ENCODE measurements at regions of chr11 and their contacts with region 1.

Region 1: DNA sequence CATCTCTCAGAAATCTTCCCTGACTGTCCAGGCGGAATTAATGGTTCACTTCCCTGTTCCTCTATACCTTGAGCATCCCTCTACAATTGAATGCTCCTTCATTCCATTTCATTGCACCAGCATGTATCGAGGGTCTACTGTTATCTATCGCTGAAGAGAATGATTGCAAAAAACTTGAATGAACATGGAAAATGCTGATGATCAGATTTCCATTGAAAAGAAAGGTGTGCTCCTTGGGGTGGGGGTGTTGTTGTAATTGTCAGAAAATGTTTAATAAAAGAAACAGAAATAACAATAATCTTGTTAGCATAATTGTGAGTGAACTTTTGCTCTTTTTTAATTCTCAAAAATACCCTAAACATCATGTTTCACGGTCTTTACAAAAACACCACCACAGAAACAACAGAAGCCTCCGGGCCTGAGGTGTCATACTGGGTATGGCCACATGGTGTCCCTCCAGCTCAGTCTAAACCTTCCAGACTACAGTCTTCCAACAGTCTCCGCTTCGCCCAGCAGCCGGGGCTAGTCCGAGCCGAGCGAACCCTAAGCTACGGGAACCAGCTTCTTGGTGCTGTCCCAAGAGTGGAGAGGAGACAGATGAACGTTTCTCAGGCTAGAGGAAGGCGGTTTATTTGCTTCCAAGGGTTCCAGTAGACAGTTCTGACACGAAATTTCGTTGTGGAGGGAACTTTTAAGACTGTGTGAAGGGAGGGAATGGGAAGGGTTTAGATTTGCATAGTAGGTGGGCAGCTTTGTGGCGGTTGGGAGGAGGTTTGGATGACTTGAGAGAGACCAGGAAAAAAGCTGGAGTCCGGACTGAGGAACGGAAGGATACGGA is 75.8 kb upstream of the ZBED5 start:
- DNase-seq: peak; percentile 96
- ATAC-seq: peak; percentile 77
- H3K4me3 ChIP-seq: peak overlapping the region; percentile 57 to 75
- H3K27ac ChIP-seq: peak overlapping the region; percentile 93
- H3K4me1 ChIP-seq: peaks cover 39% of the 10 kb centered on the region
- H3K27me3 ChIP-seq: no peaks in the 10 kb centered on the region
- CTCF ChIP-seq: peak; percentile 99

Region 2: GRCh38 chr11:10550503-10551289 is 383.0 kb before region 1 on chr11:
- CTCF ChIA-PET with region 1: no interaction called
- POLR2A ChIA-PET with region 1: no interaction called
- in situ Hi-C with region 1: no loop called
- intact Hi-C with region 1: no loop called
- DNase-seq: no peak
- ATAC-seq: peak; percentile 87
- H3K4me3 ChIP-seq: no peak overlapping the region
- H3K27ac ChIP-seq: no peak overlapping the region
- H3K4me1 ChIP-seq: no peaks in the 10 kb centered on the region
- H3K27me3 ChIP-seq: peaks cover 3% of the 10 kb centered on the region
- CTCF ChIP-seq: no peak

Region 3: DNA sequence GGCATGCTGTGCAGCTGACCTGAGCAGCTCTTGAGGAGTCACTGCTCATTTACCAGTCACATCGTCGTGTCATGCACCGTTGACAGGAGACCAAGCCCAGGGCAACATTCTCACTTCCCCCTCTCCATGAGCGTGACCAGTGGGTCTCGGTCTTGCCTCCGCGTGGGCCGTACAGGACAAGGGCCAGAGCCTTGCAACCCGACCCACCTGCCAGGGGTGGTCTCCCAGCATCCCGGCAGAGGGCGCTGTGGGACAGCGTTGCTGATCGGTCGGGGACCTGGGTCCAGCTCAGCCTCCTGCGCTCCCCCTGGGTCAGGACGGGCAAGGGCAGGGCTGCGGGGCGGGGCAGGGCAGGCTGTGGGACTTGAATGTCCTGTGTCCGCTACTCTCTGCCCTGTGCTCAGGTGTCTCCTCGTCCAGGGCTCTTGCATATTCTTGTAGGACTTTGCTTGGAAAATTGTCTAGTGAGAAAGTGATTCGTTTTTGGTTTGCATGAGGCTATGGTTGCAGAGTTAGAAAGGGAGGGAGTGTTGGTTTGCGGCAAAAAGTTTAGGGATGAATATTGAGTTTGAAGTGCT is 141.2 kb before region 1 on chr11:
- CTCF ChIA-PET with region 1: interaction called, 13 read pairs
- POLR2A ChIA-PET with region 1: no interaction called
- in situ Hi-C with region 1: no loop called
- intact Hi-C with region 1: loop called (anchors 2 kb)
- DNase-seq: no peak
- ATAC-seq: peak; percentile 95
- H3K4me3 ChIP-seq: peak overlapping the region in 1 of 2 experiments; percentile 40; a peak in 2 of 4 replicates
- H3K27ac ChIP-seq: peak overlapping the region; percentile 46; the same call in 1 of the 2 replicates
- H3K4me1 ChIP-seq: peaks cover 20% of the 10 kb centered on the region
- H3K27me3 ChIP-seq: no peaks in the 10 kb centered on the region
- CTCF ChIP-seq: peak; percentile 100

Region 4: DNA sequence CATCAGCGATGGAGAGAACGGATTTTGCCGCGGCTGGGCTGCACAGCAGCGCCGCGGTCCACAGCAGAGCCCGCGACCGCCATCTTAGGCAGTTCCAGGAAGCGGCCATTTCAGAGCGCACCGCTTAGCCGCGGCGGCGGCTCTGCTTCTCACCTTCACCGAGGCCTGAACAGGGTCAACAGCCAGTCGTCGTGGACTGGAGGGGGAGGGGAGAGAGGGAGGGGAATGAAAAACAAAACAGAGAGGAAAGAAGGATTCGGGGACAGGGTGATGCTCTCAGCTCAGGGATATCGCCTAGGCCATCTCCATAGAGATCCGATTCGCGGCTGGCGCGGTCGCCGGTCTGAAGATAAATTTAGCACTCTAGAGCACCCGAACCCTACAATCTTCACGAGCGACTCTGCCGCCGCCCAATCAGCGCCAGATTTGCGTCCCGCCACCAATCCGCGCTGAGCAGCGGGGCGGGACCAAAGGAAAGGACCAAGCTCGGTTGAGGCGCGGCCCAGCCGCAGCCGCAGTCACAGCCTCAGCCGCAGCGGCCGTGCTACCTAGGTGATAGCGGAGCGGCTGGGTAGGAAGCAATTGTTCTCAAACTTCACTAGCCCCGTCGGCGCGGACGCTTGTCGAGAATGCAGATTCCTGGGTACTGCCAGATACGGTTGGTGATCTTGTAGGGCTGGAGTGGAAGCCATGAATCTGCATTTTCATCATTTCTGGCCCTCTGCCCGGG is 75.8 kb before region 1 on chr11 and contains the start of gene ZBED5:
- CTCF ChIA-PET with region 1: interaction called, 8 read pairs
- POLR2A ChIA-PET with region 1: interaction called, 8 read pairs
- in situ Hi-C with region 1: no loop called
- intact Hi-C with region 1: loop called (anchors 2 kb)
- DNase-seq: peak; percentile 98
- ATAC-seq: peak; percentile 95
- H3K4me3 ChIP-seq: peak within 1 kb of the TSS; percentile 87 to 91
- H3K27ac ChIP-seq: peak within 1 kb of the TSS; percentile 100
- H3K4me1 ChIP-seq: peaks cover 44% of the 10 kb centered on the region
- H3K27me3 ChIP-seq: no peaks in the 10 kb centered on the region
- CTCF ChIP-seq: no peak
- total RNA-seq, gene ZBED5: 114 TPM

Region 5: GRCh38 chr11:11010624-11011127 is 77.0 kb after region 1 on chr11:
- CTCF ChIA-PET with region 1: interaction called, 20 read pairs
- POLR2A ChIA-PET with region 1: interaction called, 3 read pairs
- in situ Hi-C with region 1: no loop called
- intact Hi-C with region 1: no loop called
- DNase-seq: no peak
- ATAC-seq: peak; percentile 98
- H3K4me3 ChIP-seq: peak overlapping the region in 1 of 2 experiments; percentile 15; a peak in 2 of 4 replicates
- H3K27ac ChIP-seq: peak overlapping the region; percentile 36
- H3K4me1 ChIP-seq: peaks cover 12% of the 10 kb centered on the region
- H3K27me3 ChIP-seq: no peaks in the 10 kb centered on the region
- CTCF ChIP-seq: peak; percentile 72

Region 6: DNA sequence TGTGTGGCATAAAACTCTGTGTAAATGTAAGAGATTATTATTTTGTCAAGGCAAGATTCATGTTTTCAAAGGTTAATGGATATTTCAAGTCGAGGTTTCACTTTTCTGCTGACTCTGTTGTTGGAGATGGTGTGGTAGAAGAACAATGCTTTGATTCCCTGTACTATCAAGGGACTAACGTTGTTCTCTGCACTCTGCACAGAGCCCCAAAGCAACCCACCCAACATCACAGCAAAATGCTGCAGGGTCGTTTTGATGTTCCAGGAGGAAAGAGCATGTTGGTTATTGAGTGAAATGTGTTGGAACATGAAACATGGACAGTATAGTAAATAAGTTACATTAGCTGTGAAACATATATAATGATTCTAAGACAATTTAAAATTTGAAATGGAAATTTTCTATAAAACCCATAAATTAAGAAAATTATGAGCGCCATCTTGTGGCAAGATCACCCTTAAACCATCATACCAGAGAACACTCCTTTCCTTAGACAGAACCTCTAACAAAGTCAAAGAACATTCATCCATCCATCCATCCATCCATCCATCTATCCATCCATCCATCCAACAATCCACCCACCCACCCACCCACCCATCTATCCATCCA is 88.6 kb after region 1 on chr11:
- CTCF ChIA-PET with region 1: interaction called, 30 read pairs
- POLR2A ChIA-PET with region 1: no interaction called
- in situ Hi-C with region 1: no loop called
- intact Hi-C with region 1: loop called (anchors 1 kb)
- DNase-seq: no peak
- ATAC-seq: peak; percentile 70; the same call in 1 of the 2 replicates
- H3K4me3 ChIP-seq: no peak overlapping the region
- H3K27ac ChIP-seq: peak overlapping the region; percentile 69; the same call in 1 of the 2 replicates
- H3K4me1 ChIP-seq: 0 out of 2 replicates have a peak, but pooled peaks cover 5% of the 10 kb centered on the region
- H3K27me3 ChIP-seq: no peaks in the 10 kb centered on the region
- CTCF ChIP-seq: peak; percentile 73

Region 7: DNA sequence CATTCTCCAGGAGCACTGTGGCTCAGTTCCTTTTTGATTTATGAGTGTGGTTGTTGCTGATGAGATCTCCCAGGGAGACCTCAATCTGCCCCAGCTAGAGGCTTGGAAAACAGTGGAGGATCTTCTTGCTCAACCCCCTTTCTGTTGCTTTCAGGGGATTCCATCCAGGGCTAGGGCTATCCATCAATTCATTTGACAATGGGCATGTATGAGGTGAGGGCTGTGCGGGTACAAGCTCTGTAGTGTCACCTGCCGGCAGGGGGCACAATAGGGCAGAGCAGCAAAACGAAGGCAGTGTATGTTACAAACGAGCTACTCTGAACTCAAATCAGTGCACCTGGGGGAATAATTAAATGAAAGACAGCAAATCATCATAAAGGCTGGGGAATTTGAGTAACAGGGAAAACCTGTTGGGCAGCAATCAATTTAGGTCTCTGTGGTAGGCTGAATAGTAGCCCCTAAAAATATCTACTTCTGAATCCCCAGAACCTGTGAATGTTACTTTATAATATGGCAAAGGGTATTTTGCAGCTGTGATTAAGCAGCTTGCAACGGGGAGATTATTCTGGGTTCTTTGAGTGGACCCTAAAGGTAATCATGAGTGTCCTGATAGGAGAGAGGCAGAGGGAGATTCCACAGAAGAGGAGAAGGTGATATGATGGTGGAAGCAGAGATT is 94.5 kb after region 1 on chr11:
- CTCF ChIA-PET with region 1: interaction called, 24 read pairs
- POLR2A ChIA-PET with region 1: no interaction called
- in situ Hi-C with region 1: no loop called
- intact Hi-C with region 1: no loop called
- DNase-seq: no peak
- ATAC-seq: peak; percentile 95
- H3K4me3 ChIP-seq: no peak overlapping the region
- H3K27ac ChIP-seq: no peak overlapping the region
- H3K4me1 ChIP-seq: 0 out of 2 replicates have a peak, but pooled peaks cover 5% of the 10 kb centered on the region
- H3K27me3 ChIP-seq: no peaks in the 10 kb centered on the region
- CTCF ChIP-seq: peak; percentile 98

Region 8: DNA sequence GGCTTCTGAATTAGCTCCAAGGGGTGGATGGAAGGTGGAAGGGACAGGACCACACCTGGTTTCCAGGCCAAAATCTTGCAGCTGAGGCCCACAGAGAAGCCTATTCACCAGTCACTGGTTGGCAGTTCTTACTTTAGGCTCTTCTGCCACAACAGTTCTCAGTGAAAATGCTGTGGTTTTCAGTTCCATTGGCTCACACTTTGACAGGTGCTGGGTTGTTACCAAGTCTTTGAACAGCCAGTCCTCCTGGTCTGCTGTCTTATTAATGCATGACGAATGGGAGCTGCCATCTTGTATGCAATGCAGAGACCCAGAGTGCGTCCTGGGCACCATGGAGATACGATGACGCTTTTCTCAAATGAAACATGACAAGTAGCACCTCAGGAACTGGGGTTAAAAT is 156.1 kb after region 1 on chr11:
- CTCF ChIA-PET with region 1: no interaction called
- POLR2A ChIA-PET with region 1: no interaction called
- in situ Hi-C with region 1: no loop called
- intact Hi-C with region 1: no loop called
- DNase-seq: no peak
- ATAC-seq: no peak
- H3K4me3 ChIP-seq: no peak overlapping the region
- H3K27ac ChIP-seq: no peak overlapping the region
- H3K4me1 ChIP-seq: no peaks in the 10 kb centered on the region
- H3K27me3 ChIP-seq: no peaks in the 10 kb centered on the region; the same call in 1 of the 2 replicates
- CTCF ChIP-seq: no peak

Region 9: GRCh38 chr11:11157185-11157584 is 223.5 kb after region 1 on chr11:
- CTCF ChIA-PET with region 1: no interaction called
- POLR2A ChIA-PET with region 1: no interaction called
- in situ Hi-C with region 1: no loop called
- intact Hi-C with region 1: loop called (anchors 2 kb)
- DNase-seq: no peak
- ATAC-seq: peak; percentile 87
- H3K4me3 ChIP-seq: no peak overlapping the region
- H3K27ac ChIP-seq: no peak overlapping the region
- H3K4me1 ChIP-seq: no peaks in the 10 kb centered on the region
- H3K27me3 ChIP-seq: no peaks in the 10 kb centered on the region
- CTCF ChIP-seq: peak; percentile 82

Measured in Panc1 (cell line).